BJ (cell line): ENCODE measurements at regions of chr16 and their contacts with region 1.

Region 1: DNA sequence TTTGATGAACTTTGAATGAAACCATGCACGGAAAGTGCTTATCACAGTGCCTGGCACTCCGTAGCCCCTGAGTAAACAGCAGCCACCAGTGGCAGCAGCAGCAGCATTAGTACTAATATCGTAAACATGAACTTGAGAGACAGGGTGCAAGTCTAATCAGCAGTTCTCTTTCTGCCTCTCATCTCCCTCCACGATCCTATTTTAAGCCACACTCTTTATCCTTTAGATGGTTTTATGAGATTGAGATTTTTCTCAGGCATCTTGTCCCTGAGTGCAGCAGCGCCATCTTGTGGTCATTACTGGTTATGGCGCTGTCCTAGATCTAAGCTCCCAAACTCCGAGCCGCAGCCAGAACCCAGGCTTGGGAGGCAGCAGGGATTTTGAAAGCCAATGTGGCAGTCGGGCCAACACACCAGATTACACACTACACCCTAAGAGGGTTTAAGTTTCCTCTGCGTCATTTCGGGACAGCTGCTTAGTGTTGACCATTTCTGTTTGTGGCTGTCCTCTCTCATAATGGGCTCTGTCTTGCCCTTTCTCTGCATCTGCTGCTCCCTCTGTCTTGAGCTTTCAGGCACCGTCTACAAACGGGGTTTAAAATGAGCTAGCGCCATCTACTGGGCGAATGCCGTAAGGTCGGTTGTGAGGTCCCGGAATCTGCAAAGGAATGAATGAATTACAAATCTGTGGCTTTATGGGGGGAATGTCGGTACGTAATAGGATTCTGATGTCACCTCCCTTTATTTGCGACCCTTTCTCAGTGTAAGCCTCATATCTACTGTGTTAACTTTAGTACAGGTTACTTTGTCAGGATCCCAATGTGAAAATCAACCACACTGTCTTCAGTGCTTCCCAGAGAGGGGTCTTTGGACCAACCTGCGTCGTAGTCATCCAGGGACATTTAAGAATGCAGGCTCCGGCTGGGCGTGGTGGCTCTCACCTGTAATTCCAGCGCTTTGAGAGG is 64.5 kb downstream of the CYLD start:
- DNase-seq: peak; percentile 33
- H3K4me3 ChIP-seq: peak overlapping the region; percentile 27; the same call in 1 of the 2 replicates
- H3K27me3 ChIP-seq: no peaks in the 10 kb centered on the region
- CTCF ChIP-seq: peak; percentile 85

Region 2: GRCh38 chr16:50368410-50369132 is 437.8 kb before region 1 on chr16 and contains the start of gene BRD7:
- CTCF ChIA-PET with region 1: interaction called, 13 read pairs
- POLR2A ChIA-PET with region 1: no interaction called
- DNase-seq: no peak
- H3K4me3 ChIP-seq: peak within 1 kb of the TSS; percentile 77
- H3K27me3 ChIP-seq: peaks cover 3% of the 10 kb centered on the region; the same call in 1 of the 2 replicates
- CTCF ChIP-seq: no peak
- polyA plus RNA-seq, gene BRD7: 30.3 and 51.7 TPM in 2 replicates

Region 3: DNA sequence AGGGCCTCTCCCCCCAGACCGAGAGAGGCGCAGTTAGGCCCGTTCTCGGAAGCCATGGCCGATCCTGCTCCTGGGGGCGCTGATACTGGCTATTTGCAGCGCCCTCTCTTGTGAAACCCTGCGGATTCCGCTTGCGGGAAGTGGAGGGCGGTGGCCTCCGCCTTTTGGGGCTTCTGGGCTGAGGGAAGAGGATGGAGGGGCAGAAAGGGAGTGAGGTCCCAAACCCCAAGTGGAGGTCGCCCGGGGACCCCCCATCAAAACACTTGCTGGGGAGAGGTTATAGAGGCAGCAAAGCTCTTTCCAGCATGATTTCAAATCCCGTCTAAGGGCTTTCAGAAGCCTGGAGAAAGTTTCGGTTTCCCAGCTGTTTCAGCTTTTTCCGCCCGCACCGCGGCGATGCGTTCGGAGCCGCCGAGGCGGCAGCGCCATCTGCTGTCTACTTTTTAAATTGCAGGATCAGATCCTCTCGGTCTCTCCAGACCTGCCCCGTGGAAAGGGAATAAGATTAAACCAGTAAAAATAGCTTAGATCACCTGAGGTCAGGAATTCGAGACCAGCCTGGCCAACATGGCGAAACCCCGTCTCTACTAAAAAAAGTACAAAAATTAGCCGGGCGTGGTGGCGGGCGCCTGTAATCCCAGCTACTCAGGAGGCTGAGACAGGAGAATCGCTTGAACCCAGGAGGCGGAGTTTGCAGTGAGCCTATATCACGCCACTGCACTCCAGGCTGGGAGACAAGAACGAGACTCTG is 141.1 kb before region 1 on chr16:
- CTCF ChIA-PET with region 1: interaction called, 46 read pairs
- POLR2A ChIA-PET with region 1: no interaction called
- DNase-seq: peak; percentile 4
- H3K4me3 ChIP-seq: peak overlapping the region; percentile 30
- H3K27me3 ChIP-seq: no peaks in the 10 kb centered on the region
- CTCF ChIP-seq: peak; percentile 84

Region 4: GRCh38 chr16:50671644-50672260 is 134.6 kb before region 1 on chr16:
- CTCF ChIA-PET with region 1: interaction called, 46 read pairs
- POLR2A ChIA-PET with region 1: no interaction called
- DNase-seq: no peak
- H3K4me3 ChIP-seq: no peak overlapping the region
- H3K27me3 ChIP-seq: no peaks in the 10 kb centered on the region; the same call in none of the 2 replicates
- CTCF ChIP-seq: peak; percentile 48

Region 5: DNA sequence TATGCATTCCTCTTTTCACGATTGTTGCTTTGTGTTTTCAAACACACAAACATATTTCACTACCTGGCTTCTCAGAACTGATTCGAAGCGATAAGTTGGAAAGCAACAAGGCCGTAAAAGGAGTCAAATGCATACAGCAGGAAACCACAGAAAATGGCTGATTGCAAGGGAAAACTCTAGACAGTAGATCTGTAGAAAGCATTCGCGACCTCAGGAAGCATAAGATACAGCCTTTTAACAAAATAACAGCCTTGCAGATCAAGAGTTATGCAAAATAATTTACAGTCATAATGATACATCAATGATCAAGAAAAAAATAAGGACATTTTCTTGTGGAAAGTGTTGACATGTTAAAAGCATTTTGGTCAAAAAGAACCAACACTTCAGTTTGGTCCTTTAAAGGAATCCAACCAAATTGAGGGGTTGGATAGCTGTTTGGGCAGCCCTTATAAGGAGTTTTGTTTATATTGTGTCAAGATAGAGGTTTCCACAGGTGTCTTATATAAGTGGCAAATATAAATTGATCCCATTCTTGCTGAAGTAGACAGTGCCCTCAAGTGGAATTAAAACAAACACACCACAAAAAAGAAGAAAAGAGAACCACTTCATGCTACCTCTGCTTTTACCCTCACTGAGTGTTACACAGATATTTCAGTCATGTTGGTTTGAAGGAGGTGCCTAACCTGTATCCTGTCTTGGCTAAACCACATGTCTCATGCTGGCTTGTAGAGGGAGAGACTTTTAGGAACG is 59.0 kb before region 1 on chr16:
- CTCF ChIA-PET with region 1: interaction called, 11 read pairs
- POLR2A ChIA-PET with region 1: no interaction called
- DNase-seq: no peak
- H3K4me3 ChIP-seq: no peak overlapping the region
- H3K27me3 ChIP-seq: no peaks in the 10 kb centered on the region
- CTCF ChIP-seq: no peak

Region 6: GRCh38 chr16:50789757-50790156 is 16.6 kb before region 1 on chr16:
- CTCF ChIA-PET with region 1: interaction called, 52 read pairs
- POLR2A ChIA-PET with region 1: no interaction called
- DNase-seq: no peak
- H3K4me3 ChIP-seq: no peak overlapping the region
- H3K27me3 ChIP-seq: no peaks in the 10 kb centered on the region
- CTCF ChIP-seq: no peak

Region 7: GRCh38 chr16:50861970-50862411 is 55.6 kb after region 1 on chr16:
- CTCF ChIA-PET with region 1: no interaction called
- POLR2A ChIA-PET with region 1: no interaction called
- DNase-seq: no peak
- H3K4me3 ChIP-seq: no peak overlapping the region
- H3K27me3 ChIP-seq: no peaks in the 10 kb centered on the region
- CTCF ChIP-seq: no peak